ENCODE measurements at regions of chr21 and their contacts with region 1.

Region 1: DNA sequence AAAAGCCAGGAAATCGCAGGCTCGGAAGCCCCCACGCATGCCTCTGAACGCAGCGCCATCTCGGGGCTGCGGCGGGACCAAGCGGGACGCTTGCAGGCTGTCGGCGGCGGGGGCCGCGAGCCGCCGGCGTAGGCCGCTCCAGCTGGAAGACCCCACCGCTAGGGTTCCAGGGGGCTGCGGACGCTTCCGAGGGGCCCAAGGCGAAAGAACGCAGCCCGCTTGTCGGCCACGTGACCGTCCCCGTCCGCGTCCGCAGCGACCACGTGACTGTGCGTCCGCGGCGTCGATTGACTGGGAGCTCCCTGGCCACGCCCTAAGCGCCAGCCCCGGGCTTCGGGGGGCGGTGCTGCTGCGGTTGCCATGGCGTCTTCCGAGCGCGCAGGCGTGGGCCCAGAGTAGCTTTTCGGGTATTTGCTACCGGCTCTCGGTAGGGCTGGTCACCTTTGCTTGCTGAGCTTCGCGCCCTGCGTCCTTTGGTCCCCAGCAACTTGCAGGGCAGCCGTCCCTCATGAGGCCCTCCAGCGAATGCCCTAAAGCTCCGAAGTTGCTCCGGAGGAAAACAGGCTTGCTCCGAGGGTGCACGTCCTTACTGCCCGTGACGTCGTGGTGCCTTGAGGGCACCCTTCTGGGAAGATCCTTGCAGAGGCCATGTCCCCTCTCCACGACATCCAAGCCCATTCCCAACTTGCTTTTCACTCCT is 197.2 kb downstream of the DYRK1A start:
- DNase-seq: peak; percentile 82 to 97 (median 91)
- ATAC-seq: peak; percentile 76
- H3K4me3 ChIP-seq: peak overlapping the region; percentile 92 to 96
- H3K4me3 Mint-ChIP-seq: peak overlapping the region; percentile 99
- H3K27ac ChIP-seq: peak overlapping the region; percentile 97 to 99
- H3K27ac Mint-ChIP-seq: peak overlapping the region; percentile 100
- H3K4me1 ChIP-seq: peaks cover 15% of the 10 kb centered on the region
- H3K4me1 Mint-ChIP-seq: peaks cover 17% of the 10 kb centered on the region
- H3K27me3 ChIP-seq: no peaks in the 10 kb centered on the region
- H3K27me3 Mint-ChIP-seq: no peaks in the 10 kb centered on the region
- CTCF ChIP-seq: peak; percentile 63

Region 2: DNA sequence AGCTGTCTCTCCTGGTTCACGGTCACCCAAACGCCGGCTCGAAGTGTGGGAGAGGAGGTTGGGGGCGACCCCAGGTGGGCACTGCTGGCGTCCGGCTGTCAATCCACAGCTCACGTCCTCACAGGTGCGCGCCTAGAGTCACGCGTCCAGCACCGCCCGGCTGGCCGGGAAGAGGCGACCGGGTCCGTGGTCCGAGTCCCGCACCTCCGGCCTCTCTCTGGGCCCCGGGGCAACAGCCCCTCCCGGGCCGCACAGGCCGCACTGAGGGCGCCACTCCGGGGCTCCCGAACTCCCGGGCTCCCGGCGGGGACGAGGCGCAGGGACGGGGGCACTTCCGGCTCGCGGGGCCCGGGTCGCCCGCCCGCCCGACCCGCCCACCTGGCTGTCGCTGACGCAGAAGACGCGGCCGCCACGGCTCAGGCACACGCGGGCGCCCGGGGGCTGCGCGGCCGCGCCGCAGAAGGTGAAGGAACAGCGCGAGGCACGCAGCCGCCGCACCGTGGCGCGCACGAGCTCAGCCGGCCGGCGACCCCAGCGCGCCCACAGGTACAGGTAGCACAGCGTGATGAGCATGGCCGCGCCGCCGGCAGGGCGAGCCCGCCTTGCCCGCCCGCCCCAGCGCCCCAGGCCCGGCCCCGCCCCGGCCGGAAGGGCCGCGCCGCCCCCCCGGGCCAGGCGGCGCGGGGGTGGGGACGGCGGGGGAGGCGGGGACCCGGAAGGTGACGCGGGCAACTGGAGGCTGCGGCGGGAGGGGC is 597.5 kb before region 1 on chr21 and contains the start of gene HLCS:
- CTCF ChIA-PET with region 1: no interaction called
- POLR2A ChIA-PET with region 1: interaction called, 3 read pairs
- intact Hi-C with region 1: loop called (anchors 2 to 5 kb)
- DNase-seq: peak; percentile 43 to 90 (median 74)
- ATAC-seq: peak; percentile 90
- H3K4me3 ChIP-seq: peak within 1 kb of the TSS; percentile 65 to 66
- H3K4me3 Mint-ChIP-seq: peak within 1 kb of the TSS; percentile 85
- H3K27ac ChIP-seq: peak within 1 kb of the TSS; percentile 63 to 69
- H3K27ac Mint-ChIP-seq: peak within 1 kb of the TSS; percentile 90
- H3K4me1 ChIP-seq: peaks cover 10% of the 10 kb centered on the region
- H3K4me1 Mint-ChIP-seq: peaks cover 21% of the 10 kb centered on the region
- H3K27me3 ChIP-seq: no peaks in the 10 kb centered on the region
- H3K27me3 Mint-ChIP-seq: no peaks in the 10 kb centered on the region
- CTCF ChIP-seq: peak; percentile 36
- total RNA-seq, gene HLCS: 9.7 to 13.6 TPM

Region 3: DNA sequence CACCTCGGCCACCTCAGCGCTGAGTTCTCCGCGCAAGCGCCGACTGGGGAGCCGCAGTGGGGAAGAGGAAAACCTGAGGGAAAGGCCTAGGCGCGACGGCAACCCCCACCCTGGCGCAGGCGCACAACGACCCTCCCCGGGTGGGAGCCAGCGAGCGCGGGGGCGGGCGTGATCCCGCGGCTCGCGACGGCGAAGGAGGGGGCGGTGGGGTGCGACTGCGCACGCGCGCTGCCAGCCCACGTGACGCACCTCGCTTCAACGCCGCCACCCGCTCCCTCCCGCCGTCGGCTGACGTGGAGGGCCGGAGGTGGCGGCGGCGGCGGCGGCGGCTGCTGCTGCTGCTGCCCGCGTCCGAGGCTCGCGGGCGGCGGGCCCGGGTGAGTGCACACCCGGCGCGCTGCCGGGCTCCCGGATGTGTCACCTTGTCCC is 490.8 kb before region 1 on chr21 and contains the starts of genes PIGP and TTC3:
- CTCF ChIA-PET with region 1: no interaction called
- POLR2A ChIA-PET with region 1: no interaction called
- intact Hi-C with region 1: loop called in 1 of 2 experiments (anchors 5 kb)
- DNase-seq: peak; percentile 89 to 99 (median 95)
- ATAC-seq: peak; percentile 62
- H3K4me3 ChIP-seq: peak within 1 kb of the TSS; percentile 86 to 94
- H3K4me3 Mint-ChIP-seq: peak within 1 kb of the TSS; percentile 99
- H3K27ac ChIP-seq: peak within 1 kb of the TSS; percentile 96 to 98
- H3K27ac Mint-ChIP-seq: peak within 1 kb of the TSS; percentile 99
- H3K4me1 ChIP-seq: peaks cover 30% of the 10 kb centered on the region
- H3K4me1 Mint-ChIP-seq: peaks cover 57% of the 10 kb centered on the region
- H3K27me3 ChIP-seq: no peaks in the 10 kb centered on the region
- H3K27me3 Mint-ChIP-seq: no peaks in the 10 kb centered on the region
- CTCF ChIP-seq: no peak
- total RNA-seq, gene PIGP: 11.9 to 12.2 TPM
- total RNA-seq, gene TTC3: 137 to 141 TPM

Region 4: DNA sequence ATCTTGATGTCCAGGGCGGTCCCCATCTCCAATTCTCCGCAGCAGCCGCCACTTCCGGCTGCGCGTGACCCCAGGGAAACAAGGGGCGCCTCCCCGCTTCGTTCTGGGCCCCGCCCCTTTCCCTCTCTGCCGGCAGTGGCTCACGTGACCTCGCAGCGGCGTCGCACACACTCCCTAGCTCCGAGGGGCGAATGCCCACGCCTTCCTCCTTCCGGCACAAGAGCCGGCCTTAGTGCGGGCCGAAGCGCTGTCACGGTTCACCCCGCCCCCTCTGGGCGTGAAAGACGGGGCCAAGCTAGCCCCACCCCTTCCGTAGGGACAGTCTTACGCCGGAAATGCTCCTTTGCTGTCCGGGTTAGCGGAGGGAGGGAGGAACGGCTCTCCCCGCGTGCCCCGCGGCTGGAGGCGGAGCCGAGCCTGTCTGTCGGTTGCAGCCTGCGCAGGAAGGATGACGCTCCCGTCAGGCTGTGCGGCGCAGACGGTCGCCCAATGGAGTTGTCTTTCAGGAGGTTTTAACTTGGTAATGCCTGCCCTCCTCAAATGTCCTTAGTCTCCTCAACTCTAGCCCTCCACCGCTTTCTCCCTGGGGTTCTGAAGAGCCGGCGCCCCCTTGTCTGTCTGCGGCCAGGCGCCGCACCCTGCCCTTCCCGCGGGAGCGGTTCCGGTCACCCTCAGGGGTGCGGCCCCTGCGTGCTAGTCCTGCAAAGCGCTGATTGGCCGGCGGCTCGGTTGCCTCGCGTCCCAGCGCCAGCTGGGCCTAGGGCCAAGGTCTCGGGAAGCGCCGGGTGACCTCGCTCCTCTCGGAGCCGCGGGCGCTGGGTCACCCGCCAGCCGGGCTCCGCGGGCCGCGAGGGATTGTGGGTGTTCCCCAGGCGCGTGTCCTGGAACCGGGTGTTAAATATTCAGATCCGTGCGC is 296.3 kb before region 1 on chr21 and contains the start of gene VPS26C:
- CTCF ChIA-PET with region 1: no interaction called
- POLR2A ChIA-PET with region 1: interaction called, 22 read pairs
- intact Hi-C with region 1: loop called in 1 of 2 experiments (anchors 2 kb)
- DNase-seq: peak; percentile 96 to 100 (median 98)
- ATAC-seq: peak; percentile 84
- H3K4me3 ChIP-seq: peak within 1 kb of the TSS; percentile 71 to 97
- H3K4me3 Mint-ChIP-seq: peak within 1 kb of the TSS; percentile 96
- H3K27ac ChIP-seq: peak within 1 kb of the TSS; percentile 98 to 100
- H3K27ac Mint-ChIP-seq: peak within 1 kb of the TSS; percentile 98
- H3K4me1 ChIP-seq: peaks cover 20% of the 10 kb centered on the region
- H3K4me1 Mint-ChIP-seq: peaks cover 49% of the 10 kb centered on the region
- H3K27me3 ChIP-seq: no peaks in the 10 kb centered on the region
- H3K27me3 Mint-ChIP-seq: no peaks in the 10 kb centered on the region
- CTCF ChIP-seq: no peak
- total RNA-seq, gene VPS26C: 37.4 to 39.4 TPM

Region 5: DNA sequence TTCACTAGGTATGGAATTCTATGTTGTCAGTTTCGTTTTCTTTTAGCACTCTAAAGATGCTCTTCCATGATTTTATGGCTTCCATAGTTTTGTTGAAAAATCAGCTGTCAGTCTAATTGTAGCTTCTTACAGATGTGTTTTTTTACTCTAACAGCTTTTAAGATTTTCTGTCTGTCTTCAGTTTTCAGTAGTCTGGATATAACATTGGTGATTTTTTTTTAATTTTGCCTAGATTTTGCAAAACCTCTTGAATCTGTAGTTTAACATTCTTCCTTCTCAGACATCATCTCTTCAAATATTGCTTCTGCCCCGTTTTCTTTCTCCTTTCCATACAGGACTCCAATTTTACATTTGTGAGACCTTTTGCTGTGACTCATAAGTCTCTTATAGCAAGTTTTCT is 215.1 kb before region 1 on chr21:
- CTCF ChIA-PET with region 1: no interaction called
- POLR2A ChIA-PET with region 1: no interaction called
- intact Hi-C with region 1: no loop called
- DNase-seq: no peak
- ATAC-seq: no peak
- H3K4me3 ChIP-seq: no peak overlapping the region
- H3K4me3 Mint-ChIP-seq: no peak overlapping the region
- H3K27ac ChIP-seq: no peak overlapping the region
- H3K27ac Mint-ChIP-seq: no peak overlapping the region
- H3K4me1 ChIP-seq: no peaks in the 10 kb centered on the region
- H3K4me1 Mint-ChIP-seq: no peaks in the 10 kb centered on the region
- H3K27me3 ChIP-seq: peaks cover 0 to 2% of the 10 kb centered on the region in 2 experiments
- H3K27me3 Mint-ChIP-seq: peaks cover 6% of the 10 kb centered on the region
- CTCF ChIP-seq: no peak

Region 6: GRCh38 chr21:37496972-37497371 is 66.8 kb before region 1 on chr21:
- CTCF ChIA-PET with region 1: no interaction called
- POLR2A ChIA-PET with region 1: interaction called, 3 read pairs
- intact Hi-C with region 1: loop called in 1 of 2 experiments (anchors 5 kb)
- DNase-seq: peak in 2 of 9 experiments; percentile 16 to 38
- ATAC-seq: no peak
- H3K4me3 ChIP-seq: no peak overlapping the region
- H3K4me3 Mint-ChIP-seq: no peak overlapping the region
- H3K27ac ChIP-seq: no peak overlapping the region
- H3K27ac Mint-ChIP-seq: peak overlapping the region; percentile 5
- H3K4me1 ChIP-seq: no peaks in the 10 kb centered on the region
- H3K4me1 Mint-ChIP-seq: peaks cover 27% of the 10 kb centered on the region
- H3K27me3 ChIP-seq: no peaks in the 10 kb centered on the region
- H3K27me3 Mint-ChIP-seq: no peaks in the 10 kb centered on the region
- CTCF ChIP-seq: no peak

Region 7: GRCh38 chr21:39183237-39184007 is 1619.6 kb after region 1 on chr21 and contains the start of gene PSMG1:
- CTCF ChIA-PET with region 1: no interaction called
- POLR2A ChIA-PET with region 1: no interaction called
- intact Hi-C with region 1: loop called in 1 of 2 experiments (anchors 5 kb)
- DNase-seq: peak; percentile 86 to 97 (median 93)
- ATAC-seq: peak; percentile 92
- H3K4me3 ChIP-seq: peak within 1 kb of the TSS; percentile 88 to 89
- H3K4me3 Mint-ChIP-seq: peak within 1 kb of the TSS; percentile 97
- H3K27ac ChIP-seq: peak within 1 kb of the TSS; percentile 73 to 91
- H3K27ac Mint-ChIP-seq: peak within 1 kb of the TSS; percentile 94
- H3K4me1 ChIP-seq: peaks cover 27% of the 10 kb centered on the region
- H3K4me1 Mint-ChIP-seq: peaks cover 42% of the 10 kb centered on the region
- H3K27me3 ChIP-seq: no peaks in the 10 kb centered on the region
- H3K27me3 Mint-ChIP-seq: no peaks in the 10 kb centered on the region
- CTCF ChIP-seq: no peak
- total RNA-seq, gene PSMG1: 4.7 to 6.8 TPM

Measured in CD8-positive, alpha-beta T cell (primary cell).